Mammary epithelial cell (primary cell): ENCODE measurements at regions of chr9 and their contacts with region 1.

Region 1: GRCh38 chr9:38183994-38184568 is 115.1 kb upstream of the SHB start:
- DNase-seq: peak; percentile 25
- H3K4me3 ChIP-seq: no peak overlapping the region
- H3K27ac ChIP-seq: no peak overlapping the region
- H3K4me1 ChIP-seq: peaks cover 6% of the 10 kb centered on the region
- H3K27me3 ChIP-seq: no peaks in the 10 kb centered on the region
- CTCF ChIP-seq: no peak

Region 2: GRCh38 chr9:38227061-38227540 is 43.0 kb after region 1 on chr9:
- CTCF ChIA-PET with region 1: no interaction called
- dilution Hi-C with region 1: no loop called
- in situ Hi-C with region 1: no loop called
- intact Hi-C with region 1: no loop called
- DNase-seq: peak; percentile 95
- H3K4me3 ChIP-seq: no peak overlapping the region
- H3K27ac ChIP-seq: no peak overlapping the region
- H3K4me1 ChIP-seq: peaks cover 7% of the 10 kb centered on the region
- H3K27me3 ChIP-seq: no peaks in the 10 kb centered on the region
- CTCF ChIP-seq: no peak

Region 3: DNA sequence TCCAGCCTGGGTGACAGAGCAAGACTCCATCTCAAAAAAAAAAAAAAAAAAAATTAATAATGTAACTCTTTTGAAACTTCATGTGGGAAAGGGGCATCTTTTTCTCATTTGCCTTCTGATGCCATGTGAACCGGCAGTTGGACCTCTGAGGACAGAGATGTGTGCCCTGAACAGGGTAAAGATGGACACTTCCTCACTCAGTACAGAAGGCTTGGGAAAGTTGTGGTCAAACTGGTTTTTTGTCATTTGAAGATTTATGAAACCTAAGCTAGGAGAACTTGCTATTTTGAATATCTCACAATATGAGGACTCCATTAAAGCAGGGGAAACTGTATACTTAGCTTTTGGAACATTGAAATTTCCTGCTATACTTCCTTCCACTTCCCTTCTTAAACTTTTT is 60.9 kb after region 1 on chr9:
- CTCF ChIA-PET with region 1: no interaction called
- dilution Hi-C with region 1: loop called (anchors 5 kb)
- in situ Hi-C with region 1: no loop called
- intact Hi-C with region 1: no loop called
- DNase-seq: no peak
- H3K4me3 ChIP-seq: no peak overlapping the region
- H3K27ac ChIP-seq: no peak overlapping the region
- H3K4me1 ChIP-seq: no peaks in the 10 kb centered on the region
- H3K27me3 ChIP-seq: no peaks in the 10 kb centered on the region
- CTCF ChIP-seq: no peak